ENCODE measurements at regions of chr7 and their contacts with region 1.

Region 1: GRCh38 chr7:90412458-90413184 is 9.4 kb downstream of the CLDN12 start:
- DNase-seq: no peak
- H3K4me3 ChIP-seq: no peak overlapping the region
- CTCF ChIP-seq: no peak
- POLR2A ChIP-seq: no peak

Region 2: GRCh38 chr7:90165724-90166123 is 246.9 kb before region 1 on chr7:
- intact Hi-C with region 1: loop called (anchors 10 kb)
- DNase-seq: no peak
- H3K4me3 ChIP-seq: no peak overlapping the region
- CTCF ChIP-seq: no peak
- POLR2A ChIP-seq: no peak

Region 3: GRCh38 chr7:90966346-90966745 is 553.7 kb after region 1 on chr7:
- intact Hi-C with region 1: no loop called
- DNase-seq: no peak
- H3K4me3 ChIP-seq: no peak overlapping the region
- CTCF ChIP-seq: no peak
- POLR2A ChIP-seq: no peak